Calu3 (cell line): ENCODE measurements at regions of chr1 and their contacts with region 1.

Region 1: GRCh38 chr1:151988405-151988851 is 5.2 kb downstream of the S100A10 start:
- DNase-seq: peak; percentile 74
- H3K4me3 Mint-ChIP-seq: peak overlapping the region; percentile 90
- H3K27ac Mint-ChIP-seq: peak overlapping the region; percentile 88
- H3K4me1 Mint-ChIP-seq: peaks cover 51% of the 10 kb centered on the region
- H3K27me3 Mint-ChIP-seq: no peaks in the 10 kb centered on the region
- CTCF ChIP-seq: no peak

Region 2: DNA sequence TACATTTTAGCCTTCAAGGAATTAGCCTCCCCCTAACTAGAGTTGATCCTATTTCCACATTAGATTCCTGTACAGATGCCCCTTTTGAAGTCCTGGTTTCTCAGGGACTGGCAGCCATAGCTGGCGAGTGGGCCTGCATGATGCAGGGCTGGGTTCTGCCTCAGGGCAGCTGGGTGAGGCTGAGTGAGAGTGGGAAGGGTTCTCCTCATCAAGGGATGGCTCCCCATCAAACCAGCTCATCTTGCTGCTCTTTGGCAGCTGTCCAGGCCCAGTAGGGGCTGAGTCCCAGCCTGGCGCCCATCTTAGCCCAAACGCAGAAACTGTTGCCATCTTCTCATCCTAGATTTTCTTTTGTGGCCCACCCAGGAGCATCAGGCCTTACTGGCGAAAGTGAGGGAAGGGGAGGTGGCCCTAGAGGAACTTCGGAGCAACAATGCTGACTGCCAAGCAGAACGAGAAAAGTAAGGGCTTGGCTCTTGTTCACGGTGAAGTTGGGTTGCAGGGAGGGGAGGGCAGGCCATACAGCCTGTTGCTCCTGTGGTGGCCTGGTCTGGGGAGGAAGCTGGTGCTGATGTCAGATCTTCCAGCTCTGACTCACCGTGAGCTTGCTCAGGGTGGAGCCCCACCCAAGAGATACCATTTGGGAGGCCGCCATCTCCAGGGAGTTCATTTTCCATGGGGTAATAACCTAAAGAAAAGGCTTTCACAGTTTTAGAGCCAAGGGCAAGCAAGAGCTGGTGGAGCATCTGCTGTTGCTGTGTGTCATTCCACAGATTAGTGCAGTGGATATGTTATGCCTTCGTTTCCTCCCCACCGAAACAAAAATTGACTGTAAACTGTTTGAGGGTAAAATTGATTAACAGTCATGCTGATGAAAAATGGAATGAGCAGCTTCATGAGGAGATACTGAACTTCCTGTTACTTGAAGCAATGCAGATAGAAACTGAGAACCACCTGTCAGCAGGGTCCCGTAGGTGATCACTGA is 413.6 kb before region 1 on chr1:
- CTCF ChIA-PET with region 1: no interaction called
- intact Hi-C with region 1: no loop called
- DNase-seq: no peak
- H3K4me3 Mint-ChIP-seq: no peak overlapping the region
- H3K27ac Mint-ChIP-seq: no peak overlapping the region
- H3K4me1 Mint-ChIP-seq: peaks cover 1% of the 10 kb centered on the region
- H3K27me3 Mint-ChIP-seq: no peaks in the 10 kb centered on the region
- CTCF ChIP-seq: no peak

Region 3: DNA sequence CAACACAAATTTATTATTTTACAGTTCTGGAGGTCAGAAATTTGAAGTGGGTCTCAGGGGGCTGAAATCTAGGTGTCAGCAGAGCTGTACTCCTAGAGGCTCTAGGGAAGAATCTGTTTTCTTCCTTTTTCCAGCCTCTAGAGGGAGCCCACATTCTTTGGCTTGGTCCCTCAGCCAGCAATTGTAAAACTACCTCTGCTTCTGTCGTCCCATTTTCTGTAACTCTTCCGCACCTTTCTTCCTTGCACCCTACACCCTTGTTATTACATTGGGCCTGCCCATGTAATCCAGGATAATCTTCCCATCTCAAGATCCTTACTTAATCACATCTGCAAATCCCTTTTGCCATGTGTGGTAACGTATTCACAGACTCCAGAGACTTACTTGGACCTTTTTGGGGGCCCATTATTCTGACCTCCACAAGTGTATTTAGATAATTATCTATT is 54.4 kb before region 1 on chr1:
- CTCF ChIA-PET with region 1: interaction called, 10 read pairs
- intact Hi-C with region 1: no loop called
- DNase-seq: peak; percentile 76
- H3K4me3 Mint-ChIP-seq: no peak overlapping the region
- H3K27ac Mint-ChIP-seq: no peak overlapping the region
- H3K4me1 Mint-ChIP-seq: peaks cover 28% of the 10 kb centered on the region
- H3K27me3 Mint-ChIP-seq: no peaks in the 10 kb centered on the region
- CTCF ChIP-seq: peak; percentile 79

Region 4: GRCh38 chr1:152141974-152142584 is 153.7 kb after region 1 on chr1:
- CTCF ChIA-PET with region 1: no interaction called
- intact Hi-C with region 1: no loop called
- DNase-seq: peak; percentile 69
- H3K4me3 Mint-ChIP-seq: no peak overlapping the region
- H3K27ac Mint-ChIP-seq: no peak overlapping the region
- H3K4me1 Mint-ChIP-seq: no peaks in the 10 kb centered on the region
- H3K27me3 Mint-ChIP-seq: peaks cover 78% of the 10 kb centered on the region
- CTCF ChIP-seq: peak; percentile 80

Region 5: GRCh38 chr1:152374451-152374850 is 386.0 kb after region 1 on chr1:
- CTCF ChIA-PET with region 1: no interaction called
- intact Hi-C with region 1: no loop called
- DNase-seq: no peak
- H3K4me3 Mint-ChIP-seq: no peak overlapping the region
- H3K27ac Mint-ChIP-seq: no peak overlapping the region
- H3K4me1 Mint-ChIP-seq: no peaks in the 10 kb centered on the region
- H3K27me3 Mint-ChIP-seq: peaks cover 70% of the 10 kb centered on the region
- CTCF ChIP-seq: no peak